CD4-positive, alpha-beta memory T cell (primary cell): ENCODE measurements at regions of chr7 and their contacts with region 1.

Region 1: DNA sequence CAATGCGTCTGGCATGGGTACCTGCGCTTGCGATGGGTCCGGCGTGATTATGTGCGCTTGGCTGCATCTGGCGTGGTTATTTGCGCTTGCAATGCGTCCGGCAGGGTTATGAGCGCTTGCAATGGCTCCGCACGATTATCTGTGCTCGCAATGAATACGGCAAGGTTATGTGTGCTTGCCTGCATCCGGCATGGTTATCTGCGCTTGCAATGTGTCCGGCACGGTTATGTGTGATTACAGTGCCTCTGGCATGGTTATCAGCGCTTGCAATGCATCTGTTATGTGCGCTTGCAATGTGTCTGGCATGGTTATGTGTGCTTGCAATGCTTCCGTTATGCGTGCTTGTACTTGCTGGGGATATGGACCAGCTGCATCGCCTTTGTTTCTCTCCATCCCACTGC is 37.7 kb downstream of the RBAK start:
- DNase-seq: no peak
- H3K4me3 ChIP-seq: no peak overlapping the region
- H3K4me3 Mint-ChIP-seq: no peak overlapping the region
- H3K27ac ChIP-seq: no peak overlapping the region
- H3K27ac Mint-ChIP-seq: no peak overlapping the region
- H3K4me1 ChIP-seq: peaks cover 4% of the 10 kb centered on the region
- H3K4me1 Mint-ChIP-seq: peaks cover 0 to 8% (median 2%) of the 10 kb centered on the region in 4 donors
- H3K27me3 ChIP-seq: no peaks in the 10 kb centered on the region
- H3K27me3 Mint-ChIP-seq: peaks cover 0 to 16% of the 10 kb centered on the region in 2 donors

Region 2: DNA sequence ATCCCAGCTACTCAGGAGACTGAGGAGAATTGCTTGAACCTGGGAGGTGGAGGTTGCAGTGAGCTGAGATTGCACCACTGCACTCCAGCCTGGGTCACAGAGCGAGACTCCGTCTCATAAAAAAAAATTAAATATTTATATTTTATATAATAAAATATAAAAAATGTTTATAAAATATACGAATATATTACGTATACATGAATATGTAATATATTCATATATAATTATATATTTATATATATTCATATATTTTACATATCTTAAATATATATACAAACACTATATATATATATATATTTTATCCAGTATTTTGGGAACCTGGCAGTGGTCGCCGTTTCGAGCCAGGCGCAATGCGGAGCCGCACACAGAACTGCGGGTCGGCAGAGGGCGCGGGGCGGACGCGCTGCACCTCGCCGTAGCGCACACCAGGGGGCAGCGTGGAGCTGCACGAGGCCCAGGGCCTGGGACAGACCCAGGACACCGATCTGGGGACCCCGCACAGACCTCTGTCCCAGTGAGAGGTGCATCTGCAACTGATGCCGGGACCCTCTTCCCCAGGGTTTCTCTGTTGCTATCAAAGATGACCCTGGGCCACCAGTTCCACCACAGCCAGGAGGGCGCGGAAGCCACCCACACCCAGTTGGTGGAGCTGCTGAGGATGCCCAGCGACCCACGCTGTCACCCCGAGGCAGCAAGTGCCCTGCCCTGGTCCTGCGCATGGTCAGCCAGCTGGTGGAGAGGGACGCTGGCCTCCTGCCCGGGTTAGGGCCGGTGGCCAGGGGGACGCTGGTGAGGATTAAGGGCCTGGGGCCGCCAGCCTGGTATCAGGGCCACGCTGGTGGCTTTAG is 285.2 kb before region 1 on chr7:
- CTCF ChIA-PET with region 1: interaction called, 62 read pairs
- POLR2A ChIA-PET with region 1: no interaction called
- intact Hi-C with region 1: loop called (anchors 1 kb)
- DNase-seq: peak in 4 of 5 donors; percentile 45 to 59 (median 53)
- H3K4me3 ChIP-seq: no peak overlapping the region
- H3K4me3 Mint-ChIP-seq: no peak overlapping the region
- H3K27ac ChIP-seq: no peak overlapping the region
- H3K27ac Mint-ChIP-seq: no peak overlapping the region
- H3K4me1 ChIP-seq: no peaks in the 10 kb centered on the region
- H3K4me1 Mint-ChIP-seq: peaks cover 1 to 12% (median 6%) of the 10 kb centered on the region in 4 donors
- H3K27me3 ChIP-seq: no peaks in the 10 kb centered on the region
- H3K27me3 Mint-ChIP-seq: no peaks in the 10 kb centered on the region

Region 3: GRCh38 chr7:4830176-4830575 is 253.1 kb before region 1 on chr7:
- CTCF ChIA-PET with region 1: interaction called, 15 read pairs
- POLR2A ChIA-PET with region 1: no interaction called
- intact Hi-C with region 1: loop called (anchors 1 kb)
- DNase-seq: peak in 4 of 5 donors; percentile 29 to 56 (median 35)
- H3K4me3 ChIP-seq: no peak overlapping the region
- H3K4me3 Mint-ChIP-seq: no peak overlapping the region
- H3K27ac ChIP-seq: no peak overlapping the region
- H3K27ac Mint-ChIP-seq: peak overlapping the region in 1 of 7 donors; percentile 59
- H3K4me1 ChIP-seq: no peaks in the 10 kb centered on the region
- H3K4me1 Mint-ChIP-seq: peaks cover 0 to 4% (median 2%) of the 10 kb centered on the region in 4 donors
- H3K27me3 ChIP-seq: no peaks in the 10 kb centered on the region
- H3K27me3 Mint-ChIP-seq: peaks cover 3 to 6% of the 10 kb centered on the region in 2 donors

Region 4: DNA sequence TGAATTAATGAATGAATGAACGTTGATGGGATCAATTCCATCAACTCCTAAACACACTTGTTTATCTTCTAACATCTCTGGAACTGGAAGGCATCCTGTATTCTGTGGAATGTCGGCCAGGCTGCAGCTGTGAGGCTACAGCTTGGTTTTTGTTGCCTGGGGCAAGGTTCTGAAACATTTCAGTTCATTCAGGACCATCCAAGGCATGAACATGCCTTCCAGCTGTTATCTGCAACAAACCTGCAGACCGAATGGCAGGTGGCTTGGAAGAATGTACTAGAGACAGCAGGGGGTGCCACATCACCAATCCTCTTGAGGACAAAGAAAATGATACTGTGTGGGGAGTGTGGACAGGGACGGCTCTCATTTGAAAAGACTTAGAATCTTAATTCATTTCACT is 233.9 kb before region 1 on chr7:
- CTCF ChIA-PET with region 1: interaction called, 3 read pairs
- POLR2A ChIA-PET with region 1: no interaction called
- intact Hi-C with region 1: loop called (anchors 1 kb)
- DNase-seq: peak in 2 of 5 donors; percentile 16 to 17
- H3K4me3 ChIP-seq: no peak overlapping the region
- H3K4me3 Mint-ChIP-seq: no peak overlapping the region
- H3K27ac ChIP-seq: no peak overlapping the region
- H3K27ac Mint-ChIP-seq: no peak overlapping the region
- H3K4me1 ChIP-seq: no peaks in the 10 kb centered on the region
- H3K4me1 Mint-ChIP-seq: peaks cover 0 to 4% (median 1%) of the 10 kb centered on the region in 4 donors
- H3K27me3 ChIP-seq: no peaks in the 10 kb centered on the region
- H3K27me3 Mint-ChIP-seq: peaks cover 1 to 9% of the 10 kb centered on the region in 2 donors

Region 5: DNA sequence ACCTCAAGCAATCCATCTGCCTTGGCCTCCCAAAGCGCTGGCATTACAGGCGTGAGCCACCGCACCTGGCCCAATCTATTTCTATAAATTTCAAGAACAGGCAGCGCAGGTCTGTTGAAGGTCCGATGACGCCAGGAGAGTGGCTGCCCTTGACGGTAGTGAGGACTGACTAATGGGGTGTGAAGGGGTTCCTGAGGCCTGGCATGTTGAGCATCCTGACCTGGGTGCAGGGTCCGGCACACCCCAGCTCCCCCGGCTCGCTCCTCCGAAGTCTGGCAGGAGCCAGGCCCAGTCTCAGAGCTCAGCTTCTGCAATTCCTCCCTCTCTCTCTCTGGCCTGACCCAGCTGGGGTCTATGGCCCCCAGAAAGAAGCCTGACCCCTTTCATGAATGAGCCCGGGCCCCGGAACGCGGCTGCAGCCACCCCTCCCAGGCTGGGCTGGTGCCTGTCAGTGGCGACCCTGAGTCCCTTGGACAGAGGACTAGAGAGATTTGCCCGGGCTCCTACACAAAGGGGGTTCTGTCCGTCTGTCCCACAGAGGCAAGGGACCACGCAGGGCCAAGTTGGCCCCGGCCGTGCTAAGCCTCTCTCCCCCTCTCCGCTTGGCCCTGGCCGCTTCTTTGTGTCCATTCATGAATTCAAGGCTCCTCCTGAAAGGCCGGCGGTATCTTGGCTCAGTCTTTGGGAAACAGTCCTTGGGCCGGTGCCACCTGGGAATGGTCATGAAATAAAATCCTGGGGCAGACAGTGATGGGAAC is 143.2 kb before region 1 on chr7:
- CTCF ChIA-PET with region 1: no interaction called
- POLR2A ChIA-PET with region 1: no interaction called
- intact Hi-C with region 1: no loop called
- DNase-seq: no peak
- H3K4me3 ChIP-seq: no peak overlapping the region
- H3K4me3 Mint-ChIP-seq: no peak overlapping the region
- H3K27ac ChIP-seq: no peak overlapping the region
- H3K27ac Mint-ChIP-seq: no peak overlapping the region
- H3K4me1 ChIP-seq: no peaks in the 10 kb centered on the region
- H3K4me1 Mint-ChIP-seq: no peaks in the 10 kb centered on the region
- H3K27me3 ChIP-seq: no peaks in the 10 kb centered on the region
- H3K27me3 Mint-ChIP-seq: peaks cover 0 to 2% of the 10 kb centered on the region in 2 donors

Region 6: DNA sequence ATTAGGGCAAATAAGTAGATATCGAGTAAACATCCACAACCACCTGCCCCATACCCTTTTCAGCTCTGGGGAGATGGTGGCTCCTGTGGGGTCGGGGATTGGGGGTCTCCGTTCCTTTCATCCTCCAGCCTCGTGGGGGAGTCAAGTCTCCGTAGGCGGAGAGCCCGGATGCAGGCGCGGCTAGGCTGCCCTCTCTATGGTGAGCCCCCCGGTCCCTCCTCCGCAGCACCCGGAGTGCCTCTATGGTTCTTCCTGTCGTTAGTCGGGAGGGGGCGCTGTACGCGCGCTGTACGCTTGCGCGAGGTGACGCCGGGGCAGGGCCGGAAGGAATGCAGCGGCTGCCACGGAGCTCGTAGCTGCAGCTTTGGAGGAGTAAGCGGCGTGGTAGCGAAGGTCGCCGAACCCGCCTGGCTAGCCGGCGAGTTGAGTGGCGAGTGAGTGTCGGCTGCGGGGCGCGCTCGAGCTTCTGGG is 109.5 kb before region 1 on chr7:
- CTCF ChIA-PET with region 1: interaction called, 95 read pairs
- POLR2A ChIA-PET with region 1: interaction called, 8 read pairs
- intact Hi-C with region 1: no loop called
- DNase-seq: peak; percentile 91 to 95 (median 94)
- H3K4me3 ChIP-seq: peak overlapping the region in 1 of 2 donors; percentile 74
- H3K4me3 Mint-ChIP-seq: peak overlapping the region; percentile 94 to 99 (median 98)
- H3K27ac ChIP-seq: peak overlapping the region; percentile 64
- H3K27ac Mint-ChIP-seq: peak overlapping the region; percentile 93 to 99 (median 97)
- H3K4me1 ChIP-seq: peaks cover 16% of the 10 kb centered on the region
- H3K4me1 Mint-ChIP-seq: peaks cover 19 to 37% (median 28%) of the 10 kb centered on the region in 4 donors
- H3K27me3 ChIP-seq: no peaks in the 10 kb centered on the region
- H3K27me3 Mint-ChIP-seq: no peaks in the 10 kb centered on the region